Vagina (tissue), 2 donors: ENCODE measurements at regions of chr13 and their contacts with region 1.

Region 1: DNA sequence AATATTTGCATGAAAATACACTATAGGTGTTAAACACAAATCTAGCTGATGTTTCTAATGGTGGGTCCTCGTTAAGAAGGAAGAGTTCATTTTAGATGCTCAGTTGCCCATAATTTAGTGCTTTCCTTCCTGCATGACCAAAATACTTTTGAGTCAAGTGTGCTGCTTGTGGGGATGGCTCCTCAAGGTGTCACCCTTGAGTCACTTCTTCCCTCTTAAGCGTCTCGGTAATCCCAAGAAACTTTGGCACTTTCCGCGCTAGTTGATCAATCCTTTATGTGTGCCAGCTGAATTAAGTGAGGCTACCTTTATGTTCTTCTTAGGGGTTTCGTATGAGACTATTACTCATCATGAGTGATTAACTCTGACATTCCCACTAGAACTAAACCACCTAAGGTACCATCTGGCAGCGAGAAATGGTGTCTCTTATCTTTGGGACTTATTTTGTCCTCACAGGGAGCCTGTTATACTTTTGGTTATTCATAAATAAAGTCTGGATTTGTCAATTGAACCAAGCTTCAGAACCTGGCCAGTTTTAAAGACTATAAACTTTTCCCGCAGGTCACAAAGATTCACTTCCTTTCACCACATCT is 106.8 kb downstream of the NHLRC3 start:
- DNase-seq: no peak
- H3K4me3 ChIP-seq: no peak overlapping the region
- H3K27ac ChIP-seq: peak overlapping the region; percentile 21
- H3K4me1 ChIP-seq: no peaks in the 10 kb centered on the region
- H3K27me3 ChIP-seq: no peaks in the 10 kb centered on the region
- CTCF ChIP-seq: peak; percentile 6 to 60 (median 50)
- POLR2A ChIP-seq: no peak

Region 2: DNA sequence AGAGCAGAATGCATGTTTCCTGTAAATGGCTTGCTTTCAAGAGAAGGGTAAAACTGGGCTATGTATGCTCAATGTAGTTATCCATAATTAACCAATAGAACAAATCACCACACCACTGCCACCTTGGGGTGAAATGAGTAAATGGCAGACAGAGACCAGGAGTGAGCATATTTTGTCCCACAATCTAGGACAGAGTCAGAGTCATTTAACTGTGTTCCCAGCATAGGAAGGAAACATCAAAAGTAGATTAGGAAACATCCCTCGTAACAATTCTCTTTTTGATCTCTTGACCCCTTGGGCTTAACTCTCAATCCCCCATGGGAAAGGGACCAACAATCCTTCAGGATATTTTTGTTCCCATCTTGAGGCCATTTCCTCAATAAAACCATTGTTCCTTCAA is 118.0 kb after region 1 on chr13:
- intact Hi-C with region 1: loop called (anchors 10 kb)
- DNase-seq: no peak
- H3K4me3 ChIP-seq: no peak overlapping the region
- H3K27ac ChIP-seq: no peak overlapping the region
- H3K4me1 ChIP-seq: no peaks in the 10 kb centered on the region
- H3K27me3 ChIP-seq: no peaks in the 10 kb centered on the region
- CTCF ChIP-seq: peak in 2 of 3 experiments; percentile 42 to 55
- POLR2A ChIP-seq: no peak

Region 3: GRCh38 chr13:39616087-39616694 is 471.2 kb after region 1 on chr13:
- intact Hi-C with region 1: loop called (anchors 5 kb)
- DNase-seq: no peak
- H3K4me3 ChIP-seq: no peak overlapping the region
- H3K27ac ChIP-seq: no peak overlapping the region
- H3K4me1 ChIP-seq: no peaks in the 10 kb centered on the region
- H3K27me3 ChIP-seq: no peaks in the 10 kb centered on the region
- CTCF ChIP-seq: peak; percentile 66 to 72 (median 66)
- POLR2A ChIP-seq: no peak